ENCODE measurements at regions of chr3 and their contacts with region 1.

Region 1: DNA sequence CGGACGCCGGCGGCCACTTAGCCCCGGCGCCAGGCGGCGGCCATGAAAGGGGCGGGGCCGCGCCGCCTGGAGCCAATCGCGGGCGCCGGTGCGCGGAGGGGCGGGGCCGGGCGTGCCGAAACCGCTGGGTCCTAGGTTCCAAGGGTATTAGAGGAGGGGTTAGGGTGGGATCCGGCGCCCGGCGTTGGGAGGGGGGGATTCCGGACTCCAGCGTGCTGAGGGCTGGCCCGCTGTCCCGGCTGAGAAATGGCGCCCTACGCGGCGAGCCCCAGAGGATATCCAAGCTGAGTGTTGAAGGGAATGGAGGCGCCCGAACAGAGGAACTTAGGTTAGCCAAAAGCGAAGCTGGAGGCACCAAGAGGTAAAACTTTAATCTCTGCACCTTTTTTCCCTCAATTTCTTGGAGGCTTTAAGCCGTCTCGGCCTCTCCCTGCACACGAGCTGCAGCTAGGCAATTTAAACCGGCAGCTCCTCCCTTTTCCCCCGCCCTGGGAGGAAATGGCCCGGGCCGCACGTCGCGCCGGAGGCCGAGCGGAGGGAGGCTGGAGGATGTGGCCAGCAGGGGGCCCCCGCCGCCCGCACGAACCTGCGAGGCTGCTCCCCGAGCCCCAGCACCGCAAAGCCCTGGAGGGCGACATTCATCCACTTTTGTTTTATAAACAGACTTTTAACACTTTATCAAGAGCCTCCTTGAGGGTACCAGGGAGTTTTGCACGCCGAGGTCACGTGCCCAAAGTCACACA is at the start of gene XXYLT1:
- DNase-seq: peak; percentile 85
- H3K4me3 Mint-ChIP-seq: peak within 1 kb of the TSS; percentile 81
- H3K27ac Mint-ChIP-seq: peak within 1 kb of the TSS; percentile 69
- H3K4me1 Mint-ChIP-seq: peaks cover 27% of the 10 kb centered on the region
- H3K27me3 Mint-ChIP-seq: no peaks in the 10 kb centered on the region
- CTCF ChIP-seq: peak; percentile 90
- total RNA-seq, gene XXYLT1: 10.0 and 10.9 TPM in 2 replicates

Region 2: DNA sequence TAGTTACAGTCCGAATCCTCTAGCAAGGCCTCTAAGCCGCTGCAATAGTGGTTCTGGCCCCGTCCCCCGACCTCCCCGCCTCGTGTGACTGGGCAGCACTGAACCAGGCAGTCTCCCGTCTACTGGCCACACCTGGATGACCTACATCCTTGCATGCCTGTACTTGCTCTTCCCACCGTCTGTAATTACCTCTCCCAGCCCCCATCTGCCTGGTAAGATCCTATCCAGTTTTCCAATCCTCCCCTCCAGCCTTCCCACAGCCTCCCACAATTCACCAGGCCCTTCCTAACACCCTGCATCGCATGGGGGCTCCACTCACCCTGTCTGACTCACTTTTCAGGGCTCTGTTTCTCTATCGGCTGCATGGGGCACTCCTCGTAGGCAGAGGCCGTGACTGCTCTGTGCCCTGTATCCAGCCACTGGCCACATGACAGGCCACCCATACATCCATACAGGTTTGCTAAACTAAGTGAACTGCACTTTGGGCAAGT is 33.2 kb before region 1 on chr3:
- CTCF ChIA-PET with region 1: no interaction called
- POLR2A ChIA-PET with region 1: no interaction called
- intact Hi-C with region 1: no loop called
- DNase-seq: peak; percentile 50
- H3K4me3 Mint-ChIP-seq: no peak overlapping the region
- H3K27ac Mint-ChIP-seq: no peak overlapping the region
- H3K4me1 Mint-ChIP-seq: peaks cover 8% of the 10 kb centered on the region
- H3K27me3 Mint-ChIP-seq: no peaks in the 10 kb centered on the region
- CTCF ChIP-seq: no peak

Region 3: GRCh38 chr3:195259475-195260279 is 11.6 kb before region 1 on chr3:
- CTCF ChIA-PET with region 1: interaction called, 30 read pairs
- POLR2A ChIA-PET with region 1: interaction called, 3 read pairs
- intact Hi-C with region 1: no loop called
- DNase-seq: peak; percentile 94
- H3K4me3 Mint-ChIP-seq: peak overlapping the region; percentile 67
- H3K27ac Mint-ChIP-seq: no peak overlapping the region
- H3K4me1 Mint-ChIP-seq: peaks cover 11% of the 10 kb centered on the region
- H3K27me3 Mint-ChIP-seq: no peaks in the 10 kb centered on the region
- CTCF ChIP-seq: peak; percentile 86

Region 4: GRCh38 chr3:195286115-195286872 is 15.0 kb after region 1 on chr3:
- CTCF ChIA-PET with region 1: interaction called, 11 read pairs
- POLR2A ChIA-PET with region 1: interaction called, 6 read pairs
- intact Hi-C with region 1: no loop called
- DNase-seq: peak; percentile 55
- H3K4me3 Mint-ChIP-seq: no peak overlapping the region
- H3K27ac Mint-ChIP-seq: no peak overlapping the region
- H3K4me1 Mint-ChIP-seq: peaks cover 10% of the 10 kb centered on the region
- H3K27me3 Mint-ChIP-seq: no peaks in the 10 kb centered on the region
- CTCF ChIP-seq: no peak

Region 5: DNA sequence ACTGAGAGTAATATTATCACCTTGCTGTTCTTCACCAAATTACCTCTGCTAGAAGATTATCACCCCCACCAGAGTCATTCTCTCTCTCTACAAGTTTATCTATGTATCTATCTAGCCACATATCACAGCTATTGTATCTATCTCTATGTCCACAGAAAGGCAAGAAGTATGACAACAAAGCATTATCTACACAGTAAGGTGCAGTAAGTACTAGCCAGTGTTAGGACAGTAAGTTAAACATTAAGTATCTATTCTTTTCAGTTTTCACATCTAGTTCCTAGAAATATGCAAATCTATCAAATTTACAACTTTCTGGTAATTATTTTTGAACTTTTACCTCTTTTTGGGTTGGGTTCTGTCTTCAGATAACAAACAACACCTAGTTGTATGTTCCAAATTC is 26.2 kb after region 1 on chr3:
- CTCF ChIA-PET with region 1: interaction called, 11 read pairs
- POLR2A ChIA-PET with region 1: interaction called, 3 read pairs
- intact Hi-C with region 1: no loop called
- DNase-seq: no peak
- H3K4me3 Mint-ChIP-seq: no peak overlapping the region
- H3K27ac Mint-ChIP-seq: no peak overlapping the region
- H3K4me1 Mint-ChIP-seq: no peaks in the 10 kb centered on the region
- H3K27me3 Mint-ChIP-seq: no peaks in the 10 kb centered on the region
- CTCF ChIP-seq: no peak

Region 6: DNA sequence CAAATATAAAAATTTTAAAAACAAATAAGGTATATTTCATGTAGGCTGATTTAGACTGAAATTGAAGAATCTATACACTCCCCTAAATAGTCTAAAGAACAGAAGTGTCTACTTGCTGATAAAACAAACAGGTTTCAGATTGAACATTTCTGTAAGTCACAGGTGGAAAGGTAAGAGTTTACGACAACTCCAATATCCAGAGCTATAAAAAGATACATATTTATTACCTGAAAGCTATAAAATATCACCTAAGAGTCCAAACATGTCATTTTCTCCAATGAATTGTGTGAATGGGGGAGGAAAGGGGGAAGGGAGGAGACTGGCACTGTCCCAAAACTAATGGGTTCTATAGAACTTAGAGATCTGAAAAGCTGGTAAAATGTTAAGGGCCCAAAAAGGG is 245.7 kb after region 1 on chr3:
- CTCF ChIA-PET with region 1: interaction called, 154 read pairs
- POLR2A ChIA-PET with region 1: interaction called, 20 read pairs
- intact Hi-C with region 1: loop called (anchors 1 kb)
- DNase-seq: no peak
- H3K4me3 Mint-ChIP-seq: no peak overlapping the region
- H3K27ac Mint-ChIP-seq: no peak overlapping the region
- H3K4me1 Mint-ChIP-seq: no peaks in the 10 kb centered on the region
- H3K27me3 Mint-ChIP-seq: no peaks in the 10 kb centered on the region
- CTCF ChIP-seq: no peak

Region 7: DNA sequence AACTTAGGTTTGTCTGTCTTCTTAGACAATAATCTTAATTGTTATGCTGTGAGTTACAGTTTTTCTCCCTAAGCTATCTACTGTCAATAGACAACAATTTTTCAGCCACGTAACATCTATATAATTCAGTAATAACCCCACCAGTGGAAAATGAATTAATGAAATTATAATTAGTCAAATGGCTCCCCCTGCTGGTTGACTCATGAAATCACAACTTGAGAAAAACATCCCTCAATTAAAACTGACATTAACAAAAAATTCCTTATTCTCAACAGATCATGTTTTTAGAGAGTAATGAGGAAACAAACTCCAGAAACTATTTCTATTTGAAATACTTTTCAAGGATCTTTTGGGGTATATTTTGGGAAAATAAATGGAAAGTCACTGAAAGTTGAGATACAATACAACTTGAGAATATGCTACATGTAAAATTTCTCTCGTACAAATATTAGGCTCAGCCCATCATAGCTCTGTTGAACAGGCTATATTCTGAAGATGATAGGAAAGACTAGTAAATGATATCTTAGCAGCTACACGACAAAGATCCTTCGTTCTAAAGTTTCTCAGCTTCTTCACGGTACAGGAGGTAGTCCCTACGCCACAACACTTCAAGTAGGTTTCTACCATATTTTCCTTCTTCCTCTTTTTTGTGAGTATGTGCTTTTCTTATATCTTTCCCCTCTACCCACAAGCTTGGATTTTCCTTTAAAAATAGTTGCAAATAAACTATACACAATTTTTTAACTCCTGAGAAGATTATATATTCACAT is 251.2 kb after region 1 on chr3:
- CTCF ChIA-PET with region 1: interaction called, 154 read pairs
- POLR2A ChIA-PET with region 1: interaction called, 20 read pairs
- intact Hi-C with region 1: loop called (anchors 1 kb)
- DNase-seq: peak; percentile 59
- H3K4me3 Mint-ChIP-seq: no peak overlapping the region
- H3K27ac Mint-ChIP-seq: no peak overlapping the region
- H3K4me1 Mint-ChIP-seq: no peaks in the 10 kb centered on the region
- H3K27me3 Mint-ChIP-seq: no peaks in the 10 kb centered on the region
- CTCF ChIP-seq: peak; percentile 53

Region 8: GRCh38 chr3:195542698-195543499 is 271.6 kb after region 1 on chr3 and contains the start of gene PPP1R2:
- CTCF ChIA-PET with region 1: interaction called, 12 read pairs
- POLR2A ChIA-PET with region 1: interaction called, 27 read pairs
- intact Hi-C with region 1: no loop called
- DNase-seq: peak; percentile 94
- H3K4me3 Mint-ChIP-seq: peak within 1 kb of the TSS; percentile 76
- H3K27ac Mint-ChIP-seq: peak within 1 kb of the TSS; percentile 92
- H3K4me1 Mint-ChIP-seq: peaks cover 31% of the 10 kb centered on the region
- H3K27me3 Mint-ChIP-seq: no peaks in the 10 kb centered on the region
- CTCF ChIP-seq: no peak
- total RNA-seq, gene PPP1R2: 53.0 and 68.6 TPM in 2 replicates